ENCODE measurements at regions of chr19 and their contacts with region 1.

Region 1: DNA sequence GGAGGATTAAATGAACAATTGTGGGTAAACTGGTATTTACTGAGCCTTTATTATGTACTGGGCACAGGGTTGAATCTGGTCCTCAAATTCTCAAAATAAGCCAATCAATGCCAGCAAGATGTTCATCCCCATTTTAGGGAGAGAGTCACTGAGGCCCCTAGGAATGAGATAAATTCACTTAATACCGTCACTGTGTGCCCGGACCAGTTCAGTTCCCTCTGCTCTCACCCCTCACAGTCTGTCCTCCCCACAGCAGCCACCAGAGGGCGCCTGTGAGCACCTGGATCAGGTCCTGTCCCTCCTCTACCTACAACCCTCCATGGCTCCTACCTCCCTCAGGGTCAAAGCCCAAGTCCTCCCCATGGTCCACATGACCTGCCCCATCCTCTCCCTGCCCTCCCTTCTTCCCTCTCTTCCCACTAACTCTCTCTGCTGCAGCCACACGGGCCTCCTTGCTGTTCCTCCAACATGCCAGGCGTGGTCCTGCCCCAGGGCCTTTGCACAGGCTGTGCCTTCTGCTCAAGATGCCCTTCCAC is 42.0 kb upstream of the NFIC start:
- DNase-seq: peak; percentile 62
- ATAC-seq: peak; percentile 64
- H3K4me3 ChIP-seq: no peak overlapping the region
- H3K4me3 Mint-ChIP-seq: no peak overlapping the region
- H3K27ac ChIP-seq: no peak overlapping the region
- H3K27ac Mint-ChIP-seq: no peak overlapping the region
- H3K4me1 ChIP-seq: no peaks in the 10 kb centered on the region
- H3K4me1 Mint-ChIP-seq: no peaks in the 10 kb centered on the region
- H3K27me3 ChIP-seq: peaks cover 0 to 14% (median 0%) of the 10 kb centered on the region in 4 experiments
- H3K27me3 Mint-ChIP-seq: peaks cover 36% of the 10 kb centered on the region
- CTCF ChIP-seq: peak; percentile 70

Region 2: GRCh38 chr19:3292958-3293529 is 31.3 kb before region 1 on chr19:
- CTCF ChIA-PET with region 1: no interaction called
- POLR2A ChIA-PET with region 1: no interaction called
- intact Hi-C with region 1: no loop called
- DNase-seq: no peak
- ATAC-seq: no peak
- H3K4me3 ChIP-seq: no peak overlapping the region
- H3K4me3 Mint-ChIP-seq: no peak overlapping the region
- H3K27ac ChIP-seq: no peak overlapping the region
- H3K27ac Mint-ChIP-seq: no peak overlapping the region
- H3K4me1 ChIP-seq: no peaks in the 10 kb centered on the region
- H3K4me1 Mint-ChIP-seq: no peaks in the 10 kb centered on the region
- H3K27me3 ChIP-seq: peaks cover 0 to 21% (median 2%) of the 10 kb centered on the region in 4 experiments
- H3K27me3 Mint-ChIP-seq: peaks cover 15% of the 10 kb centered on the region
- CTCF ChIP-seq: no peak

Region 3: DNA sequence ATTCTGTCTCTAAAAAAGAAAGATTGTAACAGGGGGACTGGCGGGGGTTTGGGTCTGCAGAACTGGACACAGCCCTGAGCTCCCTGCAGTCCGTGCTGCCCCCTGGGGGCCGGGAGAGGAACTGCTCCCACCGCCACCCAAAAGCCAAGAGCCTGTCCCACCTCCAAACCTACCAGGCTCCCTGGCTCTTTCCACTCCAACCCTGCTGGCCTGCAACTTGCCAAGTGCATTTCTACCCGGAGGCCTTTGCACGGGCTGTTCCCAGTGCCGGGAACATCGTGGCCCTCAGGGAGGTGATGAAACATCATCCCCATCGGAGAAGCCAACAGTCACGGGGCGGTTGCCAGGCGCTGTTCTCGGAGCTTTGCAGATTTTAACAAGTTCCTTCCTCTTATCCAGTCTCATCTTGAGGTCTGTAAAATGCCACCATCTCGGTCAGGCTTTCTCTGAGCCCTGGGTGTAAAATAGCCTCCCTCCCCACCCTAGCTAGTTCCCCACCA is 105.2 kb after region 1 on chr19:
- CTCF ChIA-PET with region 1: interaction called, 119 read pairs
- POLR2A ChIA-PET with region 1: interaction called, 3 read pairs
- intact Hi-C with region 1: no loop called
- DNase-seq: peak; percentile 82
- ATAC-seq: peak; percentile 82
- H3K4me3 ChIP-seq: no peak overlapping the region
- H3K4me3 Mint-ChIP-seq: no peak overlapping the region
- H3K27ac ChIP-seq: no peak overlapping the region
- H3K27ac Mint-ChIP-seq: no peak overlapping the region
- H3K4me1 ChIP-seq: peaks cover 11 to 22% of the 10 kb centered on the region in 2 donors
- H3K4me1 Mint-ChIP-seq: peaks cover 13% of the 10 kb centered on the region
- H3K27me3 ChIP-seq: no peaks in the 10 kb centered on the region
- H3K27me3 Mint-ChIP-seq: no peaks in the 10 kb centered on the region
- CTCF ChIP-seq: peak; percentile 97

Region 4: DNA sequence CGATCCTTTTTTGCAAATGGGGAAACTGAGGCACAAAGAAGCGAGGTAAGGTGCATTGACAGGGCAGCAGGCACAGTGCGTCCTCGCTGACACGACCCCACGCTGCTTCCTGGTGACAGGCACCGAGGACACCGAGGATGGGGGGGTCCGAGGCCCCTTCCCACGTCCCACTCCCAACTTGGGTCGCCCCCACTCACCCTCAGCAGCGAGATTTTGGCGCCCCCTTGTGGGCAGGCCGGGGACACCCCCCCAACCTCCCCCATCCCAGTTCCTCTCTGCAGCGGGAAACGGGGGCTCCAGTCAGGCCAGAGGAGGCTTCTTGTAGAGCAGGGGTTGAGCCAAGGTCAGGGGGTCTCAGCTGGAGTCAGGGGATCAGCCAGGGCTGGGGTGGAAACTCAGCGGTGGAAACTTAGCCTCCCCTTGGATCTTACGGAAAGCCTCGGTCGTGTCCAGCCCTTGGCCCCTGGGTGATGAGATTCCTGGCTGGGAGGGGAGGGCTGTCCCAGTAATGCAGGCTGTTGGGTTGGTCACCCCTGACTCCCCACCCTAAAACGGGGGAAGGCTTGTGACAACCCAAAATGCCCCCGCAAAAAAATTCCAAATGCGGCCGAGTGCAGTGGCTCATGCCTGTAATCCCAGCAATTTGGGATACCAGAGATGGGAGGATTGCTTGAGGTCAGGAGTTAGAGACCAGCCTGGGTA is 147.7 kb after region 1 on chr19:
- CTCF ChIA-PET with region 1: interaction called, 17 read pairs
- POLR2A ChIA-PET with region 1: no interaction called
- intact Hi-C with region 1: no loop called
- DNase-seq: peak; percentile 53
- ATAC-seq: peak; percentile 47
- H3K4me3 ChIP-seq: no peak overlapping the region
- H3K4me3 Mint-ChIP-seq: no peak overlapping the region
- H3K27ac ChIP-seq: no peak overlapping the region
- H3K27ac Mint-ChIP-seq: no peak overlapping the region
- H3K4me1 ChIP-seq: no peaks in the 10 kb centered on the region
- H3K4me1 Mint-ChIP-seq: no peaks in the 10 kb centered on the region
- H3K27me3 ChIP-seq: peaks cover 0 to 5% (median 0%) of the 10 kb centered on the region in 4 experiments
- H3K27me3 Mint-ChIP-seq: peaks cover 4% of the 10 kb centered on the region
- CTCF ChIP-seq: peak; percentile 62

Region 5: DNA sequence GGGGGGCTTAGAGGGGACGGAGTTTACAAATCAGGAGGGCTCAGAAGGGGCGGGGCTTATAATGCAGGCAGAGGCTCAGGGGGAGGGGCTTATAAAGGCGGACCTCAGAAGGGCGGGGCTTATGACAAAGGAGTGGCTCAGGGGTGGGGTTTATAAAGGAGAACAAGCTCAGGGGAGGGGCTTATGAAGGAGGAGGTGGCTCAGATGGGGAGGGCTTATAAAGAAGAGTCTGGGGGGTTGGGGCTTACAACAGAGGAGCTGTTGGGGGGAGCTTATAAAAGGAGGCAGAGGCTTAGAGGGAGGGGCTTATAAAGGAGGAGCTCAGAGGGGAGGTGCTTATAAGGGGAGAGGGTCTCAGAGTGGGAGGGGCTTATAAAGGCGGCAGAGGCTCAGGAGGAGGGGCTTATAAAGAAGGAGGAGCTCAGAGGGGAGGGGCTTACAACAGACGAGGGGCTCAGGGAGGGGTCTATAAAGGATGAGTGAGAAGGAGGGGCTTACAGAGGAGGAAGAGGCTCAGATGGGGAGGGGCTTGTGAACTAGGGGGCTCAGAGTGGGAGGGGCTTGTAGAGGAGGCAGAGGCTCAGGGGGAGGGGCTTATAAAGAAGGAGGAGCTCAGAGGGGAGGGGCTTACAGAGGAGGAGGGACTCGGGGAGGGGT is 154.9 kb after region 1 on chr19:
- CTCF ChIA-PET with region 1: interaction called, 19 read pairs
- POLR2A ChIA-PET with region 1: no interaction called
- intact Hi-C with region 1: no loop called
- DNase-seq: peak; percentile 80
- ATAC-seq: peak; percentile 85
- H3K4me3 ChIP-seq: peak overlapping the region in 3 of 5 experiments; percentile 33 to 35 (median 34)
- H3K4me3 Mint-ChIP-seq: no peak overlapping the region
- H3K27ac ChIP-seq: no peak overlapping the region
- H3K27ac Mint-ChIP-seq: no peak overlapping the region
- H3K4me1 ChIP-seq: peaks cover 17 to 31% of the 10 kb centered on the region in 2 donors
- H3K4me1 Mint-ChIP-seq: peaks cover 18% of the 10 kb centered on the region
- H3K27me3 ChIP-seq: peaks cover 0 to 10% (median 0%) of the 10 kb centered on the region in 4 experiments
- H3K27me3 Mint-ChIP-seq: peaks cover 5% of the 10 kb centered on the region
- CTCF ChIP-seq: no peak